Mammary epithelial cell (primary cell): ENCODE measurements at regions of chr22 and their contacts with region 1.

Region 1: GRCh38 chr22:37508431-37508992 is 10.7 kb downstream of the CARD10 start:
- DNase-seq: no peak
- H3K4me3 ChIP-seq: no peak overlapping the region
- H3K27ac ChIP-seq: no peak overlapping the region
- H3K4me1 ChIP-seq: peaks cover 60% of the 10 kb centered on the region
- H3K27me3 ChIP-seq: no peaks in the 10 kb centered on the region
- CTCF ChIP-seq: no peak

Region 2: DNA sequence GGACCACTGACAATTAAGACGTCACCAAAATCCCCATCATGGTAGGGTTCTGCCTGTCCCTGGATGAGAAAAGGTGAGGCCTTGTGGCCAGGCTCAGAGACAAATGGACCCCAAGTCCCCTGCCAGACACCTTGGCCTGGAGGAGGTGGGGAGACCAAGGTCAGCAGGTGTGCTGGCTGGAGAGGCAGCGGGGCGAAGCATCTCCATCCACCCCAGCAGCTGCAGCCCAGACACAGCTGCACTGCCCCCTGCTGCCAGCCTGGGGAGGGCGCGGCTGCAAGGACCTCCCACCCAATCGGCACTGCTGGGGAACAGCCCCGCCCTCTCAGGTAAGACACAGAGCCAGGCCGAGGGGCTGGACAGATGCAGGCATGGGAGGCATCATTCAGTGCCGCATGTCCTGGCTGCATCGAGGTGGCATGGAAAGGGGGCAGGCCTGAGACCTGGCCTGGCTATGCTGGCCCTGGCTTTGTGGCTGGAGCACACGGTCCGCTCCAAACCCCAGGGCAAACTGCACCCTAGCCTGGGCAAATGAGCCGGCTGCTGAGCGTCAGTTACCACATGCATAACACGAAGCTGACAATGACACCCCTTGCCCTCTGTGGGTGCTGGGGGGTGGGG is 10.1 kb before region 1 on chr22:
- CTCF ChIA-PET with region 1: no interaction called
- dilution Hi-C with region 1: no loop called
- in situ Hi-C with region 1: no loop called
- intact Hi-C with region 1: loop called (anchors 2 kb)
- DNase-seq: no peak
- H3K4me3 ChIP-seq: no peak overlapping the region
- H3K27ac ChIP-seq: no peak overlapping the region
- H3K4me1 ChIP-seq: peaks cover 58% of the 10 kb centered on the region
- H3K27me3 ChIP-seq: no peaks in the 10 kb centered on the region
- CTCF ChIP-seq: peak; percentile 21 to 35

Region 3: DNA sequence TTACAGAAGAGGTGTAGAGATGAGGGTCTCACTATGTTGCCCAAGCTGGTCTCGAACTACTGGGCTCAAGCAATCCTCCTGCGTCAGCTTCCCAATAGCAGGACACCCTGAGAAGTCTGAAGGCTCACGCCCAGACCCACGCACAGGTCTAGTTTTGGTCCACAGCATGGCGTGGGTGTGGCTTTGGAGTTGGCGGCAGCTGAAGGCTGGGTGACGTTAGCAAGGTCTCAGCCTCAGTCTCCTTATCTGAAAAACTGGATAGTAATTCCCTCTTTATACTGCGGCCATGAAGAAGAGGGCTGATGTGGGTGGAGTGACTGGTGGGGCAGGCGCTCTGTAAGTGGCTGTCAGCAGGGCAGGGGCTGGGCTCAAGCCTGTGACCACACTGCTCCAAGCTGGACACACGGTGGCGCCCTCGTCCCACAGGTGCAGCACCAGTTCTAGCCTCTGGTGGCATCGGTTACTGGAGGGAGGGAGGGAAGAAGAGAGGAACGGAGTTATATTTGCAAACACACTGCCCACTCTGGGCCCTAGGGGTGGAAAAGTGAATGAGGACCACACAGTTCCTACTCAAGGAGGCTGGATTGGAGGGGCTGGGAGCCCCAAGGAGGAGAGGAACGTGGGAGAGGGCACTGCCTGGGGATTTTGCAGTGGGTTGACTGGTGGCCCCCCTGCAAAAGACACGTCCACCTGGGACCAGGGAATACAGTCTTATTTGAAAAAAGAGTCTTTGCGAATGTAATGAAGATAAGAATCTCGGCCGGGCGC is 30.3 kb after region 1 on chr22:
- CTCF ChIA-PET with region 1: no interaction called
- dilution Hi-C with region 1: no loop called
- in situ Hi-C with region 1: no loop called
- intact Hi-C with region 1: no loop called
- DNase-seq: peak; percentile 90
- H3K4me3 ChIP-seq: peak overlapping the region in 1 of 3 experiments; percentile 5
- H3K27ac ChIP-seq: peak overlapping the region; percentile 26
- H3K4me1 ChIP-seq: peaks cover 37% of the 10 kb centered on the region
- H3K27me3 ChIP-seq: no peaks in the 10 kb centered on the region
- CTCF ChIP-seq: peak; percentile 95 to 96